ENCODE measurements at regions of chr2 and their contacts with region 1.

Region 1: DNA sequence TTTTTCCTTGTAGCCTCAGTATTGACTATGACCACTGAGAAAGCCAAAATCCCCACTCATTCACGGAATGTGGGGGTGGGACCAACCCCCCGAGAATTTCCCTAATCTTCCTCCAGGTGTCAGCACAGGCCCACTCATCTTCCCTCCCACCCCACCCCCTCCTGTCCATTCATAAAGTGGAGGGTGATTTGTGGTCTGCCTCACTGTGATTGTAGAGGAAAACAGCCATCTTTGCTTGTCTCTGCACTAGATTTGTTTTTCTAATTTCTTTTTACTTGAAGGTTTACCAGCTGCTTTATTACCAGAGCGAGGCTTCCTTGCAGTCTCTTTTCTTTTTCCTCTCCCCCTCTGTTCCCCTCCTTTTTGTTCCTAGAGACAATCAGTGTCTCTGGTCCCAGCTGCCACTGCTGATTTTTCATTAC is 171.8 kb downstream of the ICOS start:
- DNase-seq: no peak

Region 2: DNA sequence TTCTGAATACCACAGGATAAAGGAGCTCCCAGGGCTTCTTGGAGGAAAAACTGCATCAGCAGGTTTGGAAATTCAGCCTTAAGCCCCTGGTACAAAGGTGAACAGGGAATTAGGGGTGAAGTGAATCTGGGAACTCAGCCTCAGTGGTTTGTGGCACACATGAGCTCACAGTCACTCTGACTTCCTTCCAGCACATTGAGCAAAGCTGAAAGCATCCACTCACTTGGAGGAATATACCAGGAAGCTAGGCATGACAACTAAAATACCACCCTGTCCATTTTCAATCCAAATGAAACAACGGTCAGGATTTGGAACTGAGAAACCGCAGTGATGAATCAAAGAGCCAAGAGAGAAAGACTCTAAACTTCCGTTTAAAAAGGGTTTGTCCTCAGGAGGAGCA is 44.3 kb after region 1 on chr2:
- intact Hi-C with region 1: no loop called
- DNase-seq: no peak

Region 3: GRCh38 chr2:204177977-204178540 is 69.7 kb after region 1 on chr2:
- intact Hi-C with region 1: loop called (anchors 5 kb)
- DNase-seq: no peak